OCI-LY7 (cell line): ENCODE measurements at regions of chr14 and their contacts with region 1.

Region 1: DNA sequence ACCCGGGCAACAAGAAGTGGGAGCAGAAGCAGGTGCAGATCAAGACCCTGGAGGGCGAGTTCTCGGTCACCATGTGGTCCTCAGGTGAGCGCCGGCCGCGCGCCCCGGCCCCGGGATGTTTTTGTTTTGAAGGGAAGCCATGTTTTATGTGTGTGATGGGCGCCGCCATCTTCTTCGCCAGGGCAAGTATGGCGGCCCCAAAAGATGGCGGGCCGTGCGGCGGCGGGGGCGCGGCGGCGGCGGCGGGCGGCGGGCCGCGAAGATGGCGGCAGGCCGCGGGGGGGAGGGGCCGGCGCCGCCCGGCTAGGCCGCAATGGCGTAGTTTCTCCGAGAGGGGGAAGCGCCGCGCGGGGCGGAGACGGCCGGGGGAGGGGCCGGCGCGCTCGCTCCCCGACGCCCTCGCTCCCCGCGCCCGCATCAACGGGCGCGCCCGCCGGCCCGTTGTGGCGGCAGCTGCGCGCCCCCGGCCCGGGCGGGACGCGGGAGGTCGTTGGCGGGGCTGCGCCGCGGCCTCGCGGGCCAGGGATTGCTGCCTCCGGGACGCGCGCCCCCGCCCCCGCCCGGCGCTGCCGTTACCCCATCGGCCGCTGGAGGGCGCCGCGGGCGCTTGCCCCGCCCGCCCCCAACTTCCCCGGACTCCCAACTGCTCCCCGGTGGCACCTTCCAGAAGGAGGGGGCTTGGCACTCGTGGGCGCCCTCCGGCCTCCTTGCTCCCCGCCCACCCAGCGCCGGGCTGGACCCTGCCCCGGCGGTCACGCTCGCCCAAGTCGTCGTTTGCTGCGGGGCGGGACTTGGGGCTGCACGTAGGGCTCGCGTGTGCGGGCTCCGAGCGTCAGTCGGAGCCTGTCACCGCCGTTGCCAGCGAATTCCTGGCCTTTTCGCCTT is 1.1 kb downstream of the YY1 start:
- DNase-seq: peak; percentile 86
- H3K4me3 ChIP-seq: peak overlapping the region; percentile 100
- H3K27ac ChIP-seq: peak overlapping the region; percentile 87
- H3K4me1 ChIP-seq: peaks cover 59% of the 10 kb centered on the region
- CTCF ChIP-seq: peak; percentile 73

Region 2: DNA sequence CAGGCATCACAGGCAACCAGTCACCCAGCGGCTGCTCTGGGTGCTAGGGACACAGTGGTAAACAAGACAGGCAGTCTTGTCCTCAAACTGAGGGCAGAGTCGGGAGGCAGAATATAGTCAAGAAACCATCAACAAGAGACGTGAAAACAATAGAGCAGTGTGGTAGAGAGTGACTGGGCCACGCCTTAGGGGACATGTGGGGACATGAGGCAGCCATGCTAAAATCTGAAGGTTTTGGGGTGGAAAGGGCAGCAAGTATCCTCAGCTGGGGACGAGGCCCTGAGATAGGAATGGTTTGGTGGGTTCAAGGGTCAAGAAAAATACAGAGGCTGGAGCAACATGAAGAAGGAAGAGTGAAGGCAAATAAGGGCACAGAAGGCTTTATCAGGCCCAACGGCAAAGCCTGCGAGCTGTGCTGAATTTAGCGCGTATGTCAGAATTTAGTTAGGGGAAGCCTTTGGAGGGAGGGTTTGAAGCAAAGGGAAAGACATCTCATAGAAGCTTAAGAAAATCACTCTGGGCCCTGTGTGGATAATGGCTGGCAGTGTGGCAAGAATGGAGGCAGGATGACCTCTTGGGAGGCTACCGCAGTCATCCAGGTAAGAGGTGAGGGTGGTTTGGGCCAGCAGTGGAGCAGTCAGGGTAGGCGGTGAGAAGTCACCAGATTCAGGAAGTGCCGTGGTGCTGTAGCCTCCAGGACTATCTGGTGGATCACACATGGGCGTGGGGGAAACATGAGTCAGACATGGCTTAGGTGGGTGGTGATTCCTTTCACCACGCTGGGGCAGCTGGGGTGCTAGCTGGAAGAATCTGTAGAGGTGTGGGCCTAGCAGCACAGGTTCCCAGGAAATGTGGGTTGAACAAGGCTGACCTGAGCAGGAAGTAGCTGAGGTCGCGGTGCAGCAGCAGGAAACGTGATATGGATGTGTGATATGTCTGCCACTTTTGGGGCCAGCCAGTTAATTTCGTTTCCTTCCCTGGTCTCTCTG is 171.8 kb before region 1 on chr14:
- CTCF ChIA-PET with region 1: no interaction called
- POLR2A ChIA-PET with region 1: interaction called, 3 read pairs
- intact Hi-C with region 1: loop called (anchors 5 kb)
- DNase-seq: peak; percentile 75
- H3K4me3 ChIP-seq: peak overlapping the region; percentile 74
- H3K27ac ChIP-seq: peak overlapping the region; percentile 99
- H3K4me1 ChIP-seq: peaks cover 97% of the 10 kb centered on the region
- CTCF ChIP-seq: no peak

Region 3: GRCh38 chr14:100213956-100214774 is 25.9 kb before region 1 on chr14:
- CTCF ChIA-PET with region 1: no interaction called
- POLR2A ChIA-PET with region 1: interaction called, 4 read pairs
- intact Hi-C with region 1: loop called (anchors 2 kb)
- DNase-seq: peak; percentile 93
- H3K4me3 ChIP-seq: peak overlapping the region; percentile 77
- H3K27ac ChIP-seq: peak overlapping the region; percentile 69
- H3K4me1 ChIP-seq: peaks cover 21% of the 10 kb centered on the region
- CTCF ChIP-seq: no peak

Region 4: DNA sequence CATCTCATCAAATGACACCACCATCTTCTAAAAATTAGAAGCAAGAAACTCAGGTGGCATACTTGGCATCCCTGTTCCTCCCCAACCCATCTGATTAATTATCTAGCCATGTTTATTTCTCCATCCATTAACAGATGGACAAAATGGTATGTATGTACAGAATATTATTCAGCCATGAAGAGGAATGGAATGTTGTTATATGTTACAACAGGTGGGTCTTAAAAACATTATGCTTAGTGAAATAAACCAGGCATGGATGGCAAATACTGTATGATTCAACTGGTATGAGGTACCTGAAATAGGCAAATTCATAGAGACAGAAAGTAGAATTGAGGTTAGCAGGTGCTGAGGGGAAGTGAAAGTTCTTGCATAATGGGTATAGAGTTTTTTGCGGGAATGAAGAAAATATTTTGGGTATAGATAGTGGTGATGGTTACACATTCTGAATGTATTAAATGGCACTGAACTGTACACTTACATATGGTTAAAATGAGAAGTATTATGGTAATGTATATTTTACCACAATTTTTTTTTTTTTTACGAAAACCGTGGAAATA is 16.3 kb after region 1 on chr14:
- CTCF ChIA-PET with region 1: interaction called, 3 read pairs
- POLR2A ChIA-PET with region 1: interaction called, 8 read pairs
- intact Hi-C with region 1: loop called (anchors 2 kb)
- DNase-seq: peak; percentile 83
- H3K4me3 ChIP-seq: peak overlapping the region; percentile 57
- H3K27ac ChIP-seq: peak overlapping the region; percentile 94
- H3K4me1 ChIP-seq: peaks cover 86% of the 10 kb centered on the region
- CTCF ChIP-seq: no peak

Region 5: GRCh38 chr14:100375963-100376735 is 136.1 kb after region 1 on chr14:
- CTCF ChIA-PET with region 1: no interaction called
- POLR2A ChIA-PET with region 1: interaction called, 3 read pairs
- intact Hi-C with region 1: loop called (anchors 2 kb)
- DNase-seq: peak; percentile 95
- H3K4me3 ChIP-seq: peak within 1 kb of the TSS; percentile 91
- H3K27ac ChIP-seq: peak within 1 kb of the TSS; percentile 51
- H3K4me1 ChIP-seq: peaks cover 30% of the 10 kb centered on the region
- CTCF ChIP-seq: no peak